Activated CD4-positive, alpha-beta T cell treated with anti-CD3 and anti-CD28 coated beads for 36 hours (primary cell): ENCODE measurements at regions of chr9 and their contacts with region 1.

Region 1: DNA sequence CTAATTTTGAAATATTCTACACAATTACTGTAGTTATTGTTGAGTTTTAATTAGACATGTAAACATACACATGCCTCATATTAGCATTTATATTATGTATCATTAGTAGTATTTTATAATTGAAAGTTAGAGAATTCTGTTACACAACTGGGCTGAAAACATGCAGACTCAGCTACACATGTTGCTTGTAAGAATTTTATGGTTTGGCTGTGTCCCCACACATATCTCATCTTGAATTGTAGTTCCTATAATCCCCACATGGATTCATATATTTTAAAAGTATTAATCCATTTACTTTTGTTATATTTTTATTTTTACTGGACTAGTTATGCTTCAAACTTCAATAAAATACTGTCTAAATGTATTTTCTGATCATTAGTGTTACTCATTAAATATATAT is 2075.3 kb upstream of the C9orf72 start:
- DNase-seq: no peak
- ATAC-seq: no peak
- H3K4me3 Mint-ChIP-seq: no peak overlapping the region
- H3K27ac Mint-ChIP-seq: no peak overlapping the region
- H3K4me1 Mint-ChIP-seq: no peaks in the 10 kb centered on the region
- H3K27me3 Mint-ChIP-seq: no peaks in the 10 kb centered on the region

Region 2: GRCh38 chr9:28930766-28931165 is 717.8 kb before region 1 on chr9:
- CTCF ChIA-PET with region 1: no interaction called
- POLR2A ChIA-PET with region 1: no interaction called
- intact Hi-C with region 1: no loop called
- DNase-seq: no peak
- ATAC-seq: no peak
- H3K4me3 Mint-ChIP-seq: no peak overlapping the region
- H3K27ac Mint-ChIP-seq: no peak overlapping the region
- H3K4me1 Mint-ChIP-seq: no peaks in the 10 kb centered on the region
- H3K27me3 Mint-ChIP-seq: no peaks in the 10 kb centered on the region

Region 3: GRCh38 chr9:29701551-29701950 is 53.0 kb after region 1 on chr9:
- CTCF ChIA-PET with region 1: no interaction called
- POLR2A ChIA-PET with region 1: no interaction called
- intact Hi-C with region 1: loop called in 1 of 2 experiments (anchors 10 kb)
- DNase-seq: no peak
- ATAC-seq: no peak
- H3K4me3 Mint-ChIP-seq: no peak overlapping the region
- H3K27ac Mint-ChIP-seq: no peak overlapping the region
- H3K4me1 Mint-ChIP-seq: no peaks in the 10 kb centered on the region
- H3K27me3 Mint-ChIP-seq: no peaks in the 10 kb centered on the region